ENCODE measurements at regions of chr1 and their contacts with region 1.

Region 1: DNA sequence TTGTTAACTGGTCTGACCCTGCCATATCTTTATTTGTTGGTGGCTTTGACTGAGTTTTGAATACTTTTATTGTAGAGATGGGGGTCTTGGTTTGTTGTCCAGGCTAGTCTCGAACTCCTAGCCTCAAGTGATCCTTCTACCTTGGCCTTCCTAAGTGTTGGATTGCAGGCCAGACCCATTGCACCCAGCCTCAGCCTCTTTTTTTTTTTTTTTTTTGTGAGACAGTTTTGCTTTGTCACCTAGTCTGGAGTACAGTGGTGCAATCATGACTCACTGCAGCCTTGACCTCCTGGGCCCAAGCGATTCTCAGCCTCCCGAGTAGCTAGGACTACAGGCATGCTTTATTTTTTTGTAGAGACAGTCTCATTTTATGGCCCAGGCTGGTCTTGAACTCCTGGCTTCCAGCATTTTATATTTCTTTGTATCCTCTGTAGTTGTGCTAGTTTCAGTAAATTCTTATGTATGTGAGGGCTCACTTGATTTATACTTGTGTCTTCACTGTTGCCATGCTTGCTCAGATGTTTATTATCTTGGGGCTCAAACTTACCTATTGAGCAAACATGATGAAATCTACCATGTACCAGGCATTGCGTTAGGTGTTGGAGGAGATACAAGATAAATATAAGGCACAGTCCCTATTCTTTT is 24.1 kb downstream of the THRAP3 start:
- DNase-seq: peak; percentile 66
- H3K4me3 Mint-ChIP-seq: peak overlapping the region; percentile 43
- H3K27ac Mint-ChIP-seq: peak overlapping the region; percentile 97
- H3K4me1 Mint-ChIP-seq: peaks cover 31% of the 10 kb centered on the region
- H3K27me3 Mint-ChIP-seq: no peaks in the 10 kb centered on the region
- CTCF ChIP-seq: no peak

Region 2: GRCh38 chr1:36258962-36259349 is 10.6 kb after region 1 on chr1:
- CTCF ChIA-PET with region 1: interaction called, 11 read pairs
- intact Hi-C with region 1: no loop called
- DNase-seq: no peak
- H3K4me3 Mint-ChIP-seq: no peak overlapping the region
- H3K27ac Mint-ChIP-seq: peak overlapping the region; percentile 31
- H3K4me1 Mint-ChIP-seq: peaks cover 41% of the 10 kb centered on the region
- H3K27me3 Mint-ChIP-seq: no peaks in the 10 kb centered on the region
- CTCF ChIP-seq: no peak

Region 3: GRCh38 chr1:36471830-36472641 is 223.7 kb after region 1 on chr1:
- CTCF ChIA-PET with region 1: no interaction called
- intact Hi-C with region 1: no loop called
- DNase-seq: no peak
- H3K4me3 Mint-ChIP-seq: no peak overlapping the region
- H3K27ac Mint-ChIP-seq: no peak overlapping the region
- H3K4me1 Mint-ChIP-seq: no peaks in the 10 kb centered on the region
- H3K27me3 Mint-ChIP-seq: peaks cover 18% of the 10 kb centered on the region
- CTCF ChIP-seq: no peak